Endothelial cell of umbilical vein (primary cell): ENCODE measurements at regions of chr15 and their contacts with region 1.

Region 1: DNA sequence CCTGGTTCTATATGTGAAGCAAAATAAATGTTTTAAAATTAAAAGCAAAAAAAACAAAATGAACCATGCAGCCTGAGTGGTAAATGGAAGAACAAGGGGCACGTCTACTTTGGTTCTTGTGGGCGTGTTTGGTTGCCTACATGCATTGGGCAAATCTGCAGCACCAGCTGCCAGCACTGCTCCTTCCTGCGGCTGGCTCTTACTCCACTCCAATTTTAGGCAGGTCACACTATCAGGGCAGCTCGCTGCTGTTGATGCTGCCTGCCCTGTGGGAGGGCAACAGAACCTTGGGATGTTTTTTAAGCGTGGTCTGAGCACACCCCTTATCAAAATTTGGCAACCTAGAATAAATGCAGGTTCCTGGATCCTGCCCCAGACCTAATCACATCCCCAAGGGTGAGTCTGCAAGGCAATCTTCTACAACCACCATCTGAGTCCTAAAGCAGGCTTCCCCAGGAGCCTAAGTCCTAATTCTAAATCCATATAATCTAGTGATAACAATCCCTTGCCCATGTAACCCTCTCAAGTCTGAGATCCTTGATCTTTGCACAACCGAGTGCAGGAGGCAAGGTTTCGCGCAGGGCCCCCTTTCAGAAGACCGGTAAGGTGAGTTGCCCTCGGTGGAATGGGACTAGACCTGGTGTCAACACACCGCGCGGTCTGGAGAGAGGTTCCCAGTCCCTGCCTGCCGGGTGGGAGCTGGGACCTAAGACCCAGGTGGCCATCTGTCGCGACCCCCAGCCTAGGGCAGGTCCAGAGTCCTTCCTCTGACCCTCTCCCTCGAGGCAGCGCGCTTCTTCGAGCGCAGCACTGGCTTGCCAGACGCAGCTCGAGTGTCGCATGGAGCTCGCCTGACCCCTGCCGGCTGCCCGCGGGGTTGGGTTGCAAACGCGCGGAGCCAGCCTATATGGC is 15.9 kb downstream of the IVD start:
- DNase-seq: peak; percentile 61
- H3K4me3 ChIP-seq: no peak overlapping the region
- H3K27ac ChIP-seq: no peak overlapping the region
- H3K4me1 ChIP-seq: no peaks in the 10 kb centered on the region
- H3K27me3 ChIP-seq: no peaks in the 10 kb centered on the region
- CTCF ChIP-seq: peak; percentile 89 to 99
- POLR2A ChIP-seq: peak; percentile 34

Region 2: GRCh38 chr15:40313531-40314398 is 107.7 kb before region 1 on chr15:
- CTCF ChIA-PET with region 1: interaction called, 10 read pairs
- POLR2A ChIA-PET with region 1: no interaction called
- dilution Hi-C with region 1: no loop called
- intact Hi-C with region 1: no loop called
- DNase-seq: peak; percentile 43
- H3K4me3 ChIP-seq: no peak overlapping the region
- H3K27ac ChIP-seq: no peak overlapping the region
- H3K4me1 ChIP-seq: peaks cover 24% of the 10 kb centered on the region
- H3K27me3 ChIP-seq: no peaks in the 10 kb centered on the region
- CTCF ChIP-seq: no peak
- POLR2A ChIP-seq: no peak

Region 3: DNA sequence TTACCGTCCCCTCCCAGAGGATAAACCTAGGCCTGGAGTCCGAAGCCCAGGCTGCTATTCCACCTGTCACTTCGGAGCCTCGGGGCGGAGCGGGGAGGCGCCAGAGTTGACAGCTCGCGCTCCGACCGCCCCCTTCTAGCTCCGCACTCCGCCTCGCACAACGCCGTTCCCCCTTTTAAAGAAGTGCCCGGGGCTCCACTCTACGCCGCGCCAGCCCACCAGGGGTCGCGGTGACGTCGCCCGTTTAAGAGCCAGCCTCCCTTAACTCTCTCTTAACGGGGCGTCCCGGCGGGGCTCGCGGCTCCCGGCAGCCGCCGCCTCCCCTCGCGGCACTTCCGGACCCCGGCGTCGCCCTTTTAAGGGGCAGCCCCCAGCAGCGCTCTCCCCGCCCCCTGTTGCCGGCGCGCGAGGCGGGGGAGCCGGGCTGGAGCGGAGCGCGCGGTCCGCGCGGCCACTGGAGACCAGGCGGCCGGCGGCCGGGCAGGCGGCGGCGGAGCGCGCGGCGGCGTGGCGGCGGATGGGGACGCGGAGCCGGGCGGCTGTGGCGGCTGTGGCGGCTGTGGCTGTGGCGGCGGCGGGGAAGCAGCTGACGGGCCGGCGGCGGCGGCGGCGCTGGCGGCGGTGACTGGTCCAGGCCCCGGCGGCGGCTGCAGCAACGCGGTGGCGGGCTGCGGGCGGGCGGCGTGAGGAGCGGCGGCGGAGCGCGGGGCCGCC is 98.1 kb before region 1 on chr15 and contains the start of gene INAFM2:
- CTCF ChIA-PET with region 1: interaction called, 10 read pairs
- POLR2A ChIA-PET with region 1: no interaction called
- dilution Hi-C with region 1: no loop called
- intact Hi-C with region 1: loop called (anchors 1 kb)
- DNase-seq: peak; percentile 98
- H3K4me3 ChIP-seq: peak within 1 kb of the TSS; percentile 41 to 67 (median 57)
- H3K27ac ChIP-seq: peak within 1 kb of the TSS; percentile 8
- H3K4me1 ChIP-seq: peaks cover 50% of the 10 kb centered on the region
- H3K27me3 ChIP-seq: no peaks in the 10 kb centered on the region
- CTCF ChIP-seq: peak; percentile 74 to 83
- POLR2A ChIP-seq: peak; percentile 67
- total RNA-seq, gene INAFM2: 23.6 and 24.1 TPM in 2 replicates

Region 4: GRCh38 chr15:40372981-40373380 is 48.5 kb before region 1 on chr15:
- CTCF ChIA-PET with region 1: interaction called, 38 read pairs
- POLR2A ChIA-PET with region 1: no interaction called
- dilution Hi-C with region 1: no loop called
- intact Hi-C with region 1: loop called (anchors 1 kb)
- DNase-seq: peak; percentile 58
- H3K4me3 ChIP-seq: no peak overlapping the region
- H3K27ac ChIP-seq: no peak overlapping the region
- H3K4me1 ChIP-seq: peaks cover 12% of the 10 kb centered on the region
- H3K27me3 ChIP-seq: no peaks in the 10 kb centered on the region
- CTCF ChIP-seq: no peak
- POLR2A ChIP-seq: no peak